Breast epithelium (tissue), 4 donors: ENCODE measurements at regions of chr1 and their contacts with region 1.

Region 1: GRCh38 chr1:94679336-94680038 is 137.9 kb upstream of the F3 start:
- DNase-seq: no peak
- H3K4me3 ChIP-seq: no peak overlapping the region
- H3K27ac ChIP-seq: peak overlapping the region; percentile 30 to 67
- H3K4me1 ChIP-seq: no peaks in the 10 kb centered on the region
- H3K27me3 ChIP-seq: no peaks in the 10 kb centered on the region
- CTCF ChIP-seq: no peak
- POLR2A ChIP-seq: no peak

Region 2: GRCh38 chr1:94425821-94426484 is 253.5 kb before region 1 on chr1:
- intact Hi-C with region 1: no loop called
- DNase-seq: no peak
- H3K4me3 ChIP-seq: peak overlapping the region in 2 of 3 donors; percentile 2 to 30
- H3K27ac ChIP-seq: peak overlapping the region; percentile 43 to 57
- H3K4me1 ChIP-seq: peaks cover 0 to 6% of the 10 kb centered on the region in 2 donors
- H3K27me3 ChIP-seq: no peaks in the 10 kb centered on the region
- CTCF ChIP-seq: no peak
- POLR2A ChIP-seq: no peak

Region 3: GRCh38 chr1:94572780-94573179 is 106.7 kb before region 1 on chr1:
- intact Hi-C with region 1: loop called (anchors 5 kb)
- DNase-seq: no peak
- H3K4me3 ChIP-seq: no peak overlapping the region
- H3K27ac ChIP-seq: no peak overlapping the region
- H3K4me1 ChIP-seq: no peaks in the 10 kb centered on the region
- H3K27me3 ChIP-seq: no peaks in the 10 kb centered on the region
- CTCF ChIP-seq: no peak
- POLR2A ChIP-seq: no peak